HEK293 (cell line): ENCODE measurements at regions of chr6 and their contacts with region 1.

Region 1: GRCh38 chr6:159042003-159042825 is 2.6 kb downstream of the TAGAP start:
- H3K4me3 ChIP-seq: no peak overlapping the region
- H3K27ac ChIP-seq: no peak overlapping the region
- H3K4me1 ChIP-seq: no peaks in the 10 kb centered on the region
- CTCF ChIP-seq: peak; percentile 62

Region 2: GRCh38 chr6:159008656-159009288 is 33.4 kb before region 1 on chr6:
- CTCF ChIA-PET with region 1: interaction called, 19 read pairs
- POLR2A ChIA-PET with region 1: no interaction called
- H3K4me3 ChIP-seq: no peak overlapping the region
- H3K27ac ChIP-seq: no peak overlapping the region
- H3K4me1 ChIP-seq: no peaks in the 10 kb centered on the region
- CTCF ChIP-seq: no peak

Region 3: GRCh38 chr6:159017757-159018559 is 24.3 kb before region 1 on chr6:
- CTCF ChIA-PET with region 1: interaction called, 21 read pairs
- POLR2A ChIA-PET with region 1: no interaction called
- H3K4me3 ChIP-seq: no peak overlapping the region
- H3K27ac ChIP-seq: no peak overlapping the region
- H3K4me1 ChIP-seq: no peaks in the 10 kb centered on the region
- CTCF ChIP-seq: no peak

Region 4: DNA sequence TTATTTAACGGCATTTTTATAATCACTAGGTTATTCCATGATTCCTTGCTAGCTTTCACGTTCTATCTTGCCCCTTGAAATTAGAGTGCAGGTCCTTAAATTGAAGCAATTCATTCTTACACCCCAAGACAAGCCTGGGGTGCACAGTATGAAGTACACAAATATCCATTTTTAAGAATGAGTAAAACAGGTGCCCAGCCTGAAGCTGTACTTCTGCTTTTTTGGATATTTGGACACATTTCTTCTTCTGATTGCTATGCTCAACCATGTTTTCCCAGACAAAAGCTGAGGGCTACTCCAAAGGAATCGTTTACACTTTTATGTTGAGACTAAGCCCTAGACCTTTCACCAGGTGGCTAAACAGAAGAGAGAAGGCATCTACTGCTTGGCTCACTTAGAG is 10.5 kb after region 1 on chr6:
- CTCF ChIA-PET with region 1: interaction called, 10 read pairs
- POLR2A ChIA-PET with region 1: no interaction called
- H3K4me3 ChIP-seq: no peak overlapping the region
- H3K27ac ChIP-seq: no peak overlapping the region
- H3K4me1 ChIP-seq: no peaks in the 10 kb centered on the region
- CTCF ChIP-seq: no peak

Region 5: GRCh38 chr6:159104163-159104925 is 62.1 kb after region 1 on chr6:
- CTCF ChIA-PET with region 1: interaction called, 48 read pairs
- POLR2A ChIA-PET with region 1: no interaction called
- H3K4me3 ChIP-seq: no peak overlapping the region
- H3K27ac ChIP-seq: no peak overlapping the region
- H3K4me1 ChIP-seq: no peaks in the 10 kb centered on the region
- CTCF ChIP-seq: peak; percentile 77

Region 6: DNA sequence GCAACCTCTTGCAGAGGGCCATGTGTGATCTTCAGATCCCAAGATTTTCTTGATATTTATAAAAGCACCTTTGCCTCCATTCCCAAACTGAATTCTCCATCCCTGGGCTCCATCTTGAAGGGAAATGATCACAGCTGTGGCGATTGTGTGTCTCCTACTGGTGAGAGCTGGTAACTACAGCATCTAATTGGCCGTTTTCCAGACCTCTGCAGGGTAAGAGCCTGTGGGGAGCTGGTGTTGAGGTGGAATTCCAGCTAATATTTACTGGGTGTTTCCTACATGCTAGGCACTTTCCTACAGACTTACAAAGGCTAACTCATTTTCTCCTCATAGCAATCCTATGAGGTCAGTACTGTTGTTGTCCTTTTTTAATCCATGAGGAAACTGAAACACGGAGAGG is 67.8 kb after region 1 on chr6:
- CTCF ChIA-PET with region 1: interaction called, 48 read pairs
- POLR2A ChIA-PET with region 1: no interaction called
- H3K4me3 ChIP-seq: no peak overlapping the region
- H3K27ac ChIP-seq: no peak overlapping the region
- H3K4me1 ChIP-seq: no peaks in the 10 kb centered on the region
- CTCF ChIP-seq: 0 out of 2 replicates have a peak, but pooled peaks have one; percentile 9

Region 7: DNA sequence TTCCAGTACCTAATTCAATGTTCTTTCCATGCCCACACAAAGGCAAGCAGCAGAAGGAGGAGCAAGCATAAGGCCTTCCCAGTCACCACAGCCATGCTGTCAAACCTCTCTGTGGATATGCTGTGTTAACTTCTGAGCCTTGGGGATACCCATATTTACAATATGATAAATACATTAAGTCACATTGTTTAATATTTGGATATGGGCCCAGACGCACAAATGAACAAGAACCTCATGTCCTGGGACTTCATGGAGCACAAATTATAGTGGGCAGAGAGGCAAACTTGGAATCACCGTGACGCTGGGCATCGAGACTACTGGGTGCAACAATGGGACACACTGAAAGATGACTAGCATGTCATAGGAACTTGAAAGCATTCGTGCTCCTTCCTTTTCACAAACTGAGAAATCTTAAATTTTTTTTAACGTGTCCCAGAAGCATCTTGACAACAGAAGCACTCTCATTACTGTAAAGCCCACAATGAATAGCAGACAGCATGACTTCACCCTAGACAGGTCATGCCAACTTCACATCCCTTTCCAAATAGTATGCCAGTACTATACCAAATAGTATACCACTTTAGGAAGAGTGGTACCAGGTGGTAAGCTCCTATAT is 634.8 kb after region 1 on chr6:
- CTCF ChIA-PET with region 1: no interaction called
- POLR2A ChIA-PET with region 1: no interaction called
- H3K4me3 ChIP-seq: no peak overlapping the region
- H3K27ac ChIP-seq: no peak overlapping the region
- H3K4me1 ChIP-seq: no peaks in the 10 kb centered on the region
- CTCF ChIP-seq: no peak